ENCODE measurements at regions of chr1 and their contacts with region 1.

Region 1: GRCh38 chr1:155859881-155860871 is 809 bp downstream of the SYT11 start:
- DNase-seq: peak; percentile 95

Region 2: GRCh38 chr1:155911156-155912055 is 51.2 kb after region 1 on chr1 and contains the start of gene RIT1:
- intact Hi-C with region 1: loop called (anchors 2 kb)
- DNase-seq: peak; percentile 95
- total RNA-seq, gene RIT1: 26.2 TPM

Measured in cardiac septum (tissue), 1 donor.